Esophagus muscularis mucosa (tissue), 4 donors: ENCODE measurements at regions of chr2 and their contacts with region 1.

Region 1: GRCh38 chr2:215900203-215900611 is 113.1 kb downstream of the MREG start:
- DNase-seq: no peak
- H3K4me3 ChIP-seq: no peak overlapping the region
- H3K27ac ChIP-seq: no peak overlapping the region
- H3K4me1 ChIP-seq: peaks cover 0 to 6% (median 3%) of the 10 kb centered on the region in 4 donors
- H3K27me3 ChIP-seq: no peaks in the 10 kb centered on the region
- CTCF ChIP-seq: no peak
- EP300 ChIP-seq: no peak
- POLR2A ChIP-seq: no peak

Region 2: DNA sequence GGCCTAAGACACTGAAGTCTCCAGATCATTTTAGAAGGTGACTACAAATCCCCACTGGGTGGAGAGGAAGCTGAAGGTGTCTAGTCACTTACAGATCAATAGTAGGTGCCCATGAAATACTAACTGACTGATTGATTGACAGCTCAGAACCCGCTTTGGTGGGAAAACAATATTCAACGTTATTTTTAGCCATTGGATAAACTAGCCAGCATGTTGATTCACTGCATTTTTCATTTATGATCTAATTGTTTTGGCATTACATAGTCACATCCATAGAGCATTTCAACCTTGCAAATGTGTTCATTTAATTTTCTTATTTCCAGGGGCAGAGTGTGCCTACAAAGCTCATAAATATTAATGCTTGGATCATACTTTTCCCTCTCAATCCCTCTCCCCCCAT is 49.1 kb before region 1 on chr2:
- intact Hi-C with region 1: loop called (anchors 5 kb)
- DNase-seq: no peak
- H3K4me3 ChIP-seq: no peak overlapping the region
- H3K27ac ChIP-seq: peak overlapping the region in 3 of 4 donors; percentile 40 to 50 (median 44)
- H3K4me1 ChIP-seq: peaks cover 0 to 40% (median 36%) of the 10 kb centered on the region in 4 donors
- H3K27me3 ChIP-seq: no peaks in the 10 kb centered on the region
- CTCF ChIP-seq: no peak
- EP300 ChIP-seq: no peak
- POLR2A ChIP-seq: no peak